ENCODE measurements at regions of chr18 and their contacts with region 1.

Region 1: DNA sequence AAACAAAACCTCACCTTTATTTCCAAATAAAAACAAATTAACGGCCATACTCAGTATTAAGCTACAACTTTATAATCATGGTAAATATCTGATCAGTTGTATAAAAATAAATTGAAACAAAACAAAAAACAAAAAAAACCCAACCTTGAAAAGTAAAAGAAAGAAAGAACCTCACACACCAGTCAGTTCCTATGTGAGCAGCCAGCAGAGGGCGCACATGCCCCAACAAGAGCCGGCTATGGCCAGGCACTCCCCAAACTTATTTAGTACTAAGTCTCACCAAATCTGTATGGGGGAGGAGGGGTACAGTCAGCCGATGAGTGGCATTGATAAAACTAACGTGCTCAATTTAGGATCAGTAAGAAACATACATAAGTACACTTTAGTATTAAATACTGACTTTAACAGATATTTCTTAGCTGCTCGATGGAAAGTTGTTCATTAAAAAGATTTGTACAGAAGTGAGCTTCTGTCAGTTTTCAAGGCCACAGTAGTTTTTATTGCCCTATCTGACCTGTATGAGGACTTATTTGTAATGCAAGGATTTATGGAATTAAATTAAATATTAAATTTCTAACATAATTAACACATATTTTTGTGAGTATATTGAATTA is 172.6 kb downstream of the TCF4 start:
- DNase-seq: no peak
- H3K4me3 ChIP-seq: no peak overlapping the region
- H3K27me3 ChIP-seq: no peaks in the 10 kb centered on the region
- CTCF ChIP-seq: peak; percentile 90

Region 2: DNA sequence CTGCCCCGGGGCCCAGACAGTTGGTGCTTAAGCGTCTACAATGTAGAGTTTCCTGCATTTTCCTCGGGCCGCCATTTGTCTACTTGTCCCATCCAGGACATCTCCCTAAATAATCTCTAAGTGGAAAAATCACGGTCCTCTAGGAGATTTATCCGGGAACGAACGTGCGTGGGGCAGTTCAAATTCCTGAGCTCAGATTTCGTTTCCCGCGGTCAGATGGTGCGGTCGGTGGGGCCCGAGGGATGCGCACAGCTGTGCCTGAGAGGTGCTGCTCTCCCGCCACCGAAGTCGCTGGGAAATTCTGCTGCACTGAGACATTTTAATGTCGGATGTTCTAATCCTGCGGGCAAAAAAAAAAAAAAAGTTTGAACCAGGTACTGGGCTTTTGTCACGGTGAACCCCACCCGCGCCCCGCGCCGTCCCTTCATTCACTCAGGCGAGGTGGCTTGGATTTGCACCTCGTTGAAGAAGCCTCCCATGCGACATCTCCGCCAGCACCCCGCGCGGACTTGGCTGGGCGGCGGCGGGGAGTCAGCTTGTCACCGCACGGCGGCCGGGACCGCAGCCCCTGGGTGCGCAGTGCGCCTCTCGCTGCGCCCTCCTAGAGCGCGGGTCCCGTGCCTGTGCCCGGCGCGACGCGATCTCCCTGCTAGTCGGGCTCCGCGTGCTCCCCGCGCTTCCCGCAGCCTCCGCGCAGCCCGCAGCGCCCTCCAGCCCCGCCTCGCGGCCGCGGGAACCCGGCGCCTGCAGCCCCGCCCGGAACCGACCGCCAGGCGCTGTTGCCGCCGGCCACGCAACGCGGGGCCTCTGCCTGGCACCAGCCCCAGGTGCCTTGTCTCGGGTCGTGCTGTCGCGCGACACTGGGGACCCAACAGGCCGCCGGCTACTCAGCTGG is 364.6 kb after region 1 on chr18:
- CTCF ChIA-PET with region 1: interaction called, 15 read pairs
- POLR2A ChIA-PET with region 1: no interaction called
- DNase-seq: no peak
- H3K4me3 ChIP-seq: peak overlapping the region; percentile 73
- H3K27me3 ChIP-seq: no peaks in the 10 kb centered on the region
- CTCF ChIP-seq: no peak

Measured in BJ (cell line).